ENCODE measurements at regions of chr12 and their contacts with region 1.

Region 1: GRCh38 chr12:116236148-116236731 is 41.3 kb downstream of the MED13L start:
- DNase-seq: no peak
- ATAC-seq: peak; percentile 70 to 72

Region 2: GRCh38 chr12:116015525-116015924 is 220.7 kb before region 1 on chr12:
- intact Hi-C with region 1: loop called (anchors 5 to 10 kb)
- DNase-seq: no peak
- ATAC-seq: peak; percentile 63 to 80

Region 3: DNA sequence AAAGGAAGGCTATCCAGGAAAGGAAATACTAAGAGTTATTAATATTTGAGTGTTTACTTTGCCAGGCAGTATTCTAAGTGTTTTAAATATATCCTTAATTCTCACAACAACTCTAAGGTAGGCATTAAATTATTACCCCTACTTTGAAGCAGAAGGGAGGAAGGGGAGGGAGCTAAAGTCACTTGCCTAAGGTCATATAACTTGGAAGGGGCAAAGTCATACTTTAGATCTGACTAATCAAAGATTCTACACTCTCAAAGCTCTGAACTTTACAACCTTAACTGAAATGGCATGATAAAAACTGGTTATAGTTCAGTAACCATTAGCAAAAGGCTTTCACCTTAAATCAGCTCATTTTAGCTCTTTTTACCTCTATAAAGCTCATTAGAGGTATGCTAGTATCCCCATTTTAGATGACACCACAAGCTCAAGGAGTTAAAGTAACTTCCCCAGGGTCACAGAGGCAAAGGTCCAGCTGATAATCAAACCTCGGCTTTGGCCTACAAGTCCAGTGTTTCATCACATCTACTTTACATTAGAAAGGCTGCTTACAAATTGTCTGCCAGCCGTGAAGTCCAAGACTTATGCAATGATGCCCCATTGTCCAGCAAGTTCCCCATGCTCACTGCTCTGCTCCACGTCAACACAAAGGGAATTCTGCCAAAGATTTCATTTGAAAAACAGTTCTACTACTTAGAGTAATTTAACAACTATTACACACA is 182.6 kb before region 1 on chr12:
- intact Hi-C with region 1: loop called in 1 of 2 experiments (anchors 10 kb)
- DNase-seq: peak; percentile 54
- ATAC-seq: peak; percentile 69 to 83

Region 4: GRCh38 chr12:116194935-116195431 is 41.3 kb before region 1 on chr12:
- intact Hi-C with region 1: no loop called
- DNase-seq: no peak
- ATAC-seq: no peak

Measured in left cardiac atrium (tissue), 4 donors.